ENCODE measurements at regions of chr14 and their contacts with region 1.

Region 1: DNA sequence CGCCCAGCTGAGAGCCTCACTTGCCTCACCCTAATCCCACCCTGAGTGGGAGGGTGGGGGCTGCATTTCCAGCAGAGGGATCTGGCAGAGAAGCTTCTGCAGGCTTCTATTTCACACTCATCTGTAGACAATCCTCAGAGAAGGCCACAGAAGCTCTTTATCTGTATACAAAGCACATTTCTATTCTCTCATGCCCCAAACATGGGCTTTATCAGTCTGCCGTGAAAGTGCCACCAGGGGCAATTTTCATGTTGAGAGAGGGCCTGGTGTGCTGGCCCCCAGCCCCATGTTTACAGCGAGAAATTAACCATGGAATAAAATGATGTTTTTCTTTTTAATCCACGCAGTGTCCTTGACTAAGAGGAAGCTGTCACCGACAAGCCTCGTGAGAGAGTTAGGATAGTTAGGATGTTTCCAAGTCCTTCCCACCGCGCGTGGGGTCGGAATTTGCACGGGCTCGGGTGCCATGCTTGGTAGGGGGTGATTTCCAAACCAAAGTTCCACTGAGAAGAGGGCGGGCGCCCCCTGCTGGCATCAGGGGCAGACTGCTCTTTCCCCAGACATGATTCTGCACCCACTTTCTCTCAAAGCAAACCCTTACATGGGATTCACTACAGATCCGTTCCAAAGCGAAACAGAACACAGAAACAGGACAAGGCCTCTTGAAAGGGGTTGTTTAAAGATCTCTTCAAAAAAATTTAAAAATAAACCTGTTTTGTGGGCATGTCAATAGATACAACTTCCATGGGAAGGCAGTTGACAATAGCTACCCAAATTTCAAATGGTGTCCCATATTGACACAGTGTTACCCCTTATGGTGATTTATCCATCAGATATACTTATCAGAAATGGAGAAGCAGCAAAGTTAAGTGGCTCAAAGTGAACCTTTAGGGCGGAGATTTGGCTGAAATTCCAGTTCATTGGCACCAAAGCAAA is 19.4 kb downstream of the BDKRB1 start:
- DNase-seq: peak; percentile 3 to 38 (median 10)
- H3K4me3 ChIP-seq: no peak overlapping the region
- H3K4me3 Mint-ChIP-seq: no peak overlapping the region
- H3K27ac ChIP-seq: no peak overlapping the region
- H3K27ac Mint-ChIP-seq: no peak overlapping the region
- H3K4me1 ChIP-seq: no peaks in the 10 kb centered on the region
- H3K4me1 Mint-ChIP-seq: no peaks in the 10 kb centered on the region
- H3K27me3 ChIP-seq: no peaks in the 10 kb centered on the region
- H3K27me3 Mint-ChIP-seq: peaks cover 0 to 1% (median 0%) of the 10 kb centered on the region in 3 donors
- CTCF ChIP-seq: peak; percentile 78

Region 2: GRCh38 chr14:96100161-96101029 is 175.1 kb before region 1 on chr14:
- intact Hi-C with region 1: loop called in 1 of 2 experiments (anchors 10 kb)
- DNase-seq: peak in 2 of 3 donors; percentile 1 to 27
- H3K4me3 ChIP-seq: no peak overlapping the region
- H3K4me3 Mint-ChIP-seq: no peak overlapping the region
- H3K27ac ChIP-seq: no peak overlapping the region
- H3K27ac Mint-ChIP-seq: no peak overlapping the region
- H3K4me1 ChIP-seq: no peaks in the 10 kb centered on the region
- H3K4me1 Mint-ChIP-seq: no peaks in the 10 kb centered on the region
- H3K27me3 ChIP-seq: no peaks in the 10 kb centered on the region
- H3K27me3 Mint-ChIP-seq: peaks cover 3 to 9% (median 4%) of the 10 kb centered on the region in 3 donors
- CTCF ChIP-seq: peak; percentile 35